WTC11 (cell line): ENCODE measurements at regions of chr19 and their contacts with region 1.

Region 1: GRCh38 chr19:44570984-44571684 is 41.7 kb upstream of the CEACAM20 start:
- DNase-seq: peak; percentile 76
- ATAC-seq: peak; percentile 74
- H3K4me3 Mint-ChIP-seq: no peak overlapping the region
- H3K27ac Mint-ChIP-seq: no peak overlapping the region
- H3K4me1 Mint-ChIP-seq: peaks cover 12% of the 10 kb centered on the region
- H3K27me3 Mint-ChIP-seq: no peaks in the 10 kb centered on the region; the same call in none of the 2 replicates
- CTCF ChIP-seq: peak; percentile 70; the same call in 1 of the 2 replicates

Region 2: DNA sequence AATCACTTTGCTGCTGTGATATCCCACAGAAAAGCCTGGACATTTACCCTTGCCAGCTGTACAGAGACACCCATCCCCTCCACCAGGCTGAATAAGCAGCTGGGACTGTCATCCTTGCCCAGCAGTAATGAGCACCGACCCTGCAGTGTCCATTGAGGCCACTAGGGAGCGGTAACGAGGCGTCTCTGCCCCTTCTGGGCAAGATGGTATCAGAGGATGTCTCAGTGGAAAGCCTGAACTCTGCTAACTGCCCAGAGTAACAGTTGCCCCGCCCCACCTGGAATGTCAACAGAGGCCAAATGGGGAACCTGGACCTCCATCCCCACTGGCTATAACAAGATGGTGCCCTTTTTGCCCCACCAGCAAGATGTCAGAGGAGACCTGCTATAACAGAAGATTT is 18.8 kb before region 1 on chr19:
- CTCF ChIA-PET with region 1: interaction called, 30 read pairs
- POLR2A ChIA-PET with region 1: no interaction called
- DNase-seq: peak; percentile 95
- ATAC-seq: peak; percentile 99
- H3K4me3 Mint-ChIP-seq: no peak overlapping the region
- H3K27ac Mint-ChIP-seq: no peak overlapping the region
- H3K4me1 Mint-ChIP-seq: no peaks in the 10 kb centered on the region
- H3K27me3 Mint-ChIP-seq: peaks cover 16% of the 10 kb centered on the region
- CTCF ChIP-seq: peak; percentile 79

Region 3: GRCh38 chr19:44596428-44597130 is 25.4 kb after region 1 on chr19:
- CTCF ChIA-PET with region 1: interaction called, 13 read pairs
- POLR2A ChIA-PET with region 1: no interaction called
- DNase-seq: no peak
- ATAC-seq: peak; percentile 65
- H3K4me3 Mint-ChIP-seq: no peak overlapping the region
- H3K27ac Mint-ChIP-seq: no peak overlapping the region
- H3K4me1 Mint-ChIP-seq: peaks cover 14% of the 10 kb centered on the region
- H3K27me3 Mint-ChIP-seq: peaks cover 5% of the 10 kb centered on the region
- CTCF ChIP-seq: no peak

Region 4: GRCh38 chr19:44626048-44626624 is 55.0 kb after region 1 on chr19:
- CTCF ChIA-PET with region 1: interaction called, 17 read pairs
- POLR2A ChIA-PET with region 1: interaction called, 3 read pairs
- DNase-seq: no peak
- ATAC-seq: no peak
- H3K4me3 Mint-ChIP-seq: no peak overlapping the region
- H3K27ac Mint-ChIP-seq: no peak overlapping the region
- H3K4me1 Mint-ChIP-seq: no peaks in the 10 kb centered on the region
- H3K27me3 Mint-ChIP-seq: peaks cover 6% of the 10 kb centered on the region
- CTCF ChIP-seq: no peak

Region 5: GRCh38 chr19:44653977-44654774 is 83.0 kb after region 1 on chr19:
- CTCF ChIA-PET with region 1: interaction called, 50 read pairs
- POLR2A ChIA-PET with region 1: no interaction called
- DNase-seq: peak; percentile 83
- ATAC-seq: peak; percentile 47
- H3K4me3 Mint-ChIP-seq: no peak overlapping the region
- H3K27ac Mint-ChIP-seq: no peak overlapping the region
- H3K4me1 Mint-ChIP-seq: no peaks in the 10 kb centered on the region
- H3K27me3 Mint-ChIP-seq: no peaks in the 10 kb centered on the region
- CTCF ChIP-seq: no peak

Region 6: DNA sequence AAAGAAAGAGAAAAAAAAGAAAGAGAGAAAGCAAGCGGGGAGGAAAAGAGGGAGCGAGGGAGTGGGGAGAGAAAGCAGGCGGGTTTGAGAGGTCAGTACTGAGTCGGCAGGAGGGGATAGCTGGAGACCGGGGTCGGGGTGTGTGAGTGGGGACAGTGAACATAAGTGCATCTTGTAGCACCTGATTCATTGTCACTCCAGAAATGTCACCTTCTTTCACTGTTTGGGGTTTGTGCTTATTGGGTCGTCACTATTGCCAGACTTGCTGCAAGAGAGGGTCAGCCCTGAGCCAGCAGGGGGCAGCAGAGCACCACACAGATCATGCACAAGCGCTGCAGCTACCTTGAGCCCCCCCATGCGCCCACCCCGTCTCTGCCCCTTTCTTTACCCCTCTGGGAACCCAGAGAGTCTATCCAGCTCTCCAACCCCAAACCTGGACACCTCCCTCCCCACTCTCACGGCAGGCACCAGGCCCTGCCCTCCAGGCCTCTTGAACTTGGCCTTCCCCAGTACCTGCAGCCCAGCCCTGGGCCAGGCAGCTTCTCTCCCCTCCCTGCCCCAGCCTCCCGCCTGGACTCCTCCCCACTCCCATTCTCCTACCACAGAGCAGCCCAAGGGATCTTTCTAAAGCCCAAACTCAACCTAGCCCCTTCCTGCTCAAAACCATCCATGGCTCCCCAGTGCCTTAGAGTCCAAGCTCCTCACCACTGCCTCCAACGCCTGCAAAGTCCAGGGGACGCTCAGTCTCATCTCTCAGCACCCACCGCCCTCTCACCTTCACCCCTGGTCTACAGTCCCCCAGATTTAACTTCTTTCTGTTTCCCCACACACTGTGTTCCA is 118.1 kb after region 1 on chr19:
- CTCF ChIA-PET with region 1: interaction called, 17 read pairs
- POLR2A ChIA-PET with region 1: no interaction called
- DNase-seq: peak; percentile 94
- ATAC-seq: peak; percentile 84
- H3K4me3 Mint-ChIP-seq: peak overlapping the region; percentile 11; the same call in 1 of the 2 replicates
- H3K27ac Mint-ChIP-seq: no peak overlapping the region
- H3K4me1 Mint-ChIP-seq: peaks cover 22% of the 10 kb centered on the region
- H3K27me3 Mint-ChIP-seq: no peaks in the 10 kb centered on the region
- CTCF ChIP-seq: peak; percentile 97

Region 7: GRCh38 chr19:44770550-44771257 is 199.6 kb after region 1 on chr19:
- CTCF ChIA-PET with region 1: interaction called, 35 read pairs
- POLR2A ChIA-PET with region 1: no interaction called
- DNase-seq: peak; percentile 99
- ATAC-seq: peak; percentile 100
- H3K4me3 Mint-ChIP-seq: no peak overlapping the region; the same call in 1 of the 2 replicates
- H3K27ac Mint-ChIP-seq: 0 out of 2 replicates have a peak overlapping the region, but pooled peaks have one; percentile 60
- H3K4me1 Mint-ChIP-seq: peaks cover 6% of the 10 kb centered on the region
- H3K27me3 Mint-ChIP-seq: peaks cover 36% of the 10 kb centered on the region
- CTCF ChIP-seq: peak; percentile 82